Aorta (tissue), 5 donors: ENCODE measurements at regions of chr14 and their contacts with region 1.

Region 1: GRCh38 chr14:34982417-34983147 is at the start of gene SRP54:
- DNase-seq: peak; percentile 99
- ATAC-seq: peak; percentile 98
- H3K4me3 ChIP-seq: peak within 1 kb of the TSS; percentile 71 to 85
- H3K27ac ChIP-seq: peak within 1 kb of the TSS; percentile 73 to 88
- H3K4me1 ChIP-seq: no peaks in the 10 kb centered on the region
- H3K27me3 ChIP-seq: no peaks in the 10 kb centered on the region
- total RNA-seq, gene SRP54: 48.7 to 57.5 TPM

Region 2: GRCh38 chr14:34873591-34874385 is 108.8 kb before region 1 on chr14:
- intact Hi-C with region 1: loop called (anchors 2 to 5 kb)
- DNase-seq: peak; percentile 94 to 95
- ATAC-seq: peak; percentile 93
- H3K4me3 ChIP-seq: peak overlapping the region; percentile 58 to 85
- H3K27ac ChIP-seq: peak overlapping the region; percentile 72 to 88
- H3K4me1 ChIP-seq: no peaks in the 10 kb centered on the region
- H3K27me3 ChIP-seq: no peaks in the 10 kb centered on the region

Region 3: DNA sequence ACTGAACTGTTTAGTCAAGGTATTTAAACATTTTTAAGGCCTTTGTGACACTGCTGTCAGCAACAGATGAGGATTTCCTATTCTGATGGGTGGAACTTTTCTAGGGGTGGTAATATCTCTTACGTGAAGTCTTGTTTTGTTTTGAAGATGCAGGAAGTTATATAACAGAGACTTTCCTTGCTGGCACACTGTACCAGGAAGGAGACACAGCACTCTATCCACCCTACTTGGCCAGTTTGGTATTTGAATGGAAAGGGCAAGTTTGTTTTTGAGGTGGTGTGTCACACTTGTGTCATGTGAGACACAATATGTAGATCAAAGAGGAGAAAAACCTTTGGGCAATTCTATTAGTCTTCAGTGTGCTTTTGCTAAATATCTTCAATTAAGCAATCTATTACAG is 51.4 kb before region 1 on chr14:
- intact Hi-C with region 1: no loop called
- DNase-seq: no peak
- ATAC-seq: peak; percentile 48
- H3K4me3 ChIP-seq: no peak overlapping the region
- H3K27ac ChIP-seq: no peak overlapping the region
- H3K4me1 ChIP-seq: no peaks in the 10 kb centered on the region
- H3K27me3 ChIP-seq: no peaks in the 10 kb centered on the region

Region 4: GRCh38 chr14:35046048-35046741 is 63.6 kb after region 1 on chr14 and contains the start of gene FAM177A1:
- intact Hi-C with region 1: loop called (anchors 5 kb)
- DNase-seq: peak; percentile 99 to 100
- ATAC-seq: peak; percentile 99
- H3K4me3 ChIP-seq: peak within 1 kb of the TSS; percentile 67 to 83
- H3K27ac ChIP-seq: peak within 1 kb of the TSS; percentile 97 to 99
- H3K4me1 ChIP-seq: peaks cover 0 to 6% of the 10 kb centered on the region in 2 donors
- H3K27me3 ChIP-seq: no peaks in the 10 kb centered on the region
- total RNA-seq, gene FAM177A1: 70.7 to 94.0 TPM